Body of pancreas (tissue), 4 donors: ENCODE measurements at regions of chr16 and their contacts with region 1.

Region 1: GRCh38 chr16:71412270-71413160 is 29.3 kb downstream of the TLE7 start:
- DNase-seq: peak; percentile 74 to 80 (median 76)
- ATAC-seq: peak; percentile 87
- H3K4me3 ChIP-seq: no peak overlapping the region
- H3K27ac ChIP-seq: no peak overlapping the region
- H3K4me1 ChIP-seq: peaks cover 13% of the 10 kb centered on the region
- H3K27me3 ChIP-seq: no peaks in the 10 kb centered on the region
- CTCF ChIP-seq: peak; percentile 77 to 89 (median 84)
- POLR2A ChIP-seq: no peak

Region 2: DNA sequence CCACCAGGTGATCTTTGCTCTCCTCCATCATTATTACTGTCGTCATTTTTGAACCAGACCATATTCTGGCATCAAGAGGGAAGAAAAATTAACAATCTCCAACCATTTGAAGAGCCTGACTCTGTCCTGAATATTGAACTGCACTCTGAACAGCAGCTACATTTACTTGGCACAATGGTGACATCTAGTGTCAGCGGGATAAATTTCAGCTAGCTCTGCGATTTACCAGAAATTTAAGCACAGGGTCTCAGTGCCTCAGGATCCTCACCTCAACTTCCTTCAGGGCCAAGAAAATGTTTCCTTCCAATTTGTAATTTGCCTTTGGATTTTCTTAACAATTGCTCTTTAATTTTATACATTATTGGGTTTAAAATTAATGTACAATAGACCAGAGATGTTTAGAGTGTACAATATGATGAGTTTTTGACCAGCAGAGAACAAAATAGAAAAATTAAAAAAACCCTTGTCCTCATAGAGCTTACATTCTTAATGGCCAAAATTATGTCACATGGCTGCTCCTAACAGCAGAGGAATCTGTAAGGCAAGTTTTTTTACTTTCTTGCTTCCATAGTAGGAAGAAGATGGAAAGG is 87.4 kb after region 1 on chr16:
- intact Hi-C with region 1: loop called (anchors 5 kb)
- DNase-seq: peak; percentile 46 to 59 (median 51)
- ATAC-seq: peak; percentile 74
- H3K4me3 ChIP-seq: no peak overlapping the region
- H3K27ac ChIP-seq: no peak overlapping the region
- H3K4me1 ChIP-seq: peaks cover 7% of the 10 kb centered on the region
- H3K27me3 ChIP-seq: no peaks in the 10 kb centered on the region
- CTCF ChIP-seq: peak; percentile 45 to 86 (median 78)
- POLR2A ChIP-seq: no peak